Panc1 (cell line): ENCODE measurements at regions of chr2 and their contacts with region 1.

Region 1: DNA sequence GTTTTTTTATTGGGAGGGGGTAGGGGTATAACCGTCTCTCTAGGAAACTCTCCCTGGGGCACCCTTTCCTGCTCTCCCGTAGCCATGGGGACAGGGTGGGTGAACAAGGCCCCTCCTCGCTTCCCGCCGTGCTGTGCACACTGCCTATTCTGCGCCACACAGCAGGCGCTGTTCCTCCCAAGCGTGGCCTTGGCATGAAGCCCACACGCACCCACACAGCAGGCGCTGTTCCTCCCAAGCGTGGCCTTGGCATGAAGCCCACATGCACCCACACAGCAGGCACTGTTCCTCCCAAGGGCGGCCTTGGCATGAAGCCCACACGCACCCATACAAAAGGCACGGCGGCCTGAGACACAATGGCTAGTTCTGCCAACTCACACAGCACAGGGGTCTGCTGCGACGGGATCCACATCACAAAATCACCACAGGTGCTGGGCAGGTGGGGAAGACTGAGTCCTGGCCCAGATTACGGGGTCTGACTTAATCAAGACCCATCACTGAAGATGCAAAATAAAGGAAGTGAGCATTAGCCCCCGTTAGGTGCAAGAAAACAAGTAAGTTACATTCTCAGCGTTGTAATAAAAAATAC is 46.6 kb upstream of the TPO start:
- DNase-seq: no peak
- ATAC-seq: no peak
- H3K4me3 ChIP-seq: no peak overlapping the region
- H3K27ac ChIP-seq: no peak overlapping the region
- H3K4me1 ChIP-seq: no peaks in the 10 kb centered on the region
- H3K27me3 ChIP-seq: no peaks in the 10 kb centered on the region
- CTCF ChIP-seq: no peak

Region 2: DNA sequence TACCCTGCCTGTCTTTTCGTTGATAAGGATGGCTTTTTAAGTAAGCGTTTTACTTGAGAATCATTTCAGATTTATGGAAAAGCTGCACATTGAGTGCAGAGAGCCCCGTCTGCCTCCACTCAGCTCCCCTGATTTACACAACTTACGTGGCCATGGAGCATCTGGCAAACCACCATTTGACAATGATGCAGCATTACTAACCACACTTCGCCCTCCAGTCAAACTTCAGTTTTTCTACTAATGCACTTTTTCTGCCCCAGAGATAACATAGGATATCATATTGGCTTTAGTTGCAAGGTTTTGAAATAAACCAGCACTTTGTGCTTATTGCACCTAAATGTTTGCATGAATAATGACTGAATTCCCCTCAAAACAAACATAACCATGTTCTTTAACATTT is 118.5 kb before region 1 on chr2:
- CTCF ChIA-PET with region 1: interaction called, 14 read pairs
- POLR2A ChIA-PET with region 1: no interaction called
- in situ Hi-C with region 1: no loop called
- intact Hi-C with region 1: no loop called
- DNase-seq: no peak
- ATAC-seq: no peak
- H3K4me3 ChIP-seq: no peak overlapping the region
- H3K27ac ChIP-seq: no peak overlapping the region
- H3K4me1 ChIP-seq: no peaks in the 10 kb centered on the region
- H3K27me3 ChIP-seq: no peaks in the 10 kb centered on the region; the same call in 1 of the 2 replicates
- CTCF ChIP-seq: no peak

Region 3: DNA sequence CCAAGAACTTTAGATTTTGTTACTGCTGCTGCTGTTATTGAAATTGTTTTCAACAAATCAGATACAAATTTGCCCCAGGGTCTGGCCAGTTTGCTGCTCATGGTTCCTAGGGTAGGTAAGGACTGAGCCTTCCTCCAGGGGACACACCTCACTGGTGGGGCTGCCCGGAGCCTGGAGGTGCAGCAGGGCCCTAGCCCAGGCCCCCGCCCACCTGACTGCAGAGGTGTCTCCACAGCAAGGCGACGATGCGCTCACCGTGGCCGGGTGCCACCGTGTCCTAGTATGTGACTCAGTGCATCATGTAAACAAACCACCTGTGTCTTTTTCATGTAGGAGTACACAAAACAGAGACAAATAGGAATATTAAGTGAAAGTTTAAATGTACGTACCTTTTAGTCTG is 106.9 kb before region 1 on chr2:
- CTCF ChIA-PET with region 1: no interaction called
- POLR2A ChIA-PET with region 1: no interaction called
- in situ Hi-C with region 1: no loop called
- intact Hi-C with region 1: no loop called
- DNase-seq: no peak
- ATAC-seq: no peak
- H3K4me3 ChIP-seq: no peak overlapping the region
- H3K27ac ChIP-seq: no peak overlapping the region
- H3K4me1 ChIP-seq: no peaks in the 10 kb centered on the region
- H3K27me3 ChIP-seq: peaks cover 2% of the 10 kb centered on the region; the same call in 1 of the 2 replicates
- CTCF ChIP-seq: no peak

Region 4: GRCh38 chr2:2134042-2134441 is 767.4 kb after region 1 on chr2:
- CTCF ChIA-PET with region 1: no interaction called
- POLR2A ChIA-PET with region 1: no interaction called
- in situ Hi-C with region 1: no loop called
- intact Hi-C with region 1: no loop called
- DNase-seq: no peak
- ATAC-seq: no peak
- H3K4me3 ChIP-seq: no peak overlapping the region
- H3K27ac ChIP-seq: no peak overlapping the region
- H3K4me1 ChIP-seq: no peaks in the 10 kb centered on the region
- H3K27me3 ChIP-seq: peaks cover 11% of the 10 kb centered on the region; the same call in 1 of the 2 replicates
- CTCF ChIP-seq: peak; percentile 14; the same call in 1 of the 2 replicates